ENCODE measurements at regions of chr5 and their contacts with region 1.

Region 1: DNA sequence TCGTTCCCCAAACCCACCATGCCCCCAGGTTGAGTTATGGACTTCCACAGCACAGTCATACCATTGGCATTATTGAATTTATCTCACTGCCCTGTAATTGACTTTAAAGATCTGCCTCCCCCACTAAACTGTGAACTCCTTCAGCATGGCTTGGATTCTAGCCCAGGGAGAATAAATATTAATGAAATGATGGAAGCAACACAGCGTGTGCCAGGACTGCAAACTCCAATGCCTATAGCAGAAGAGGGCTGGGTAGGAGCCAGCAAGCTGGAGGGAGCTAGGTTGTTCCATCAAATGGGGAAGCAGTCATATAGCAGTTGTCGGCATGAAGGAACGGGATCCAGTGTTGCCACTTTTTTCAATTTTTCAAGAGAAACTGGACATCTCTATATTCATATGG is 69.0 kb upstream of the MSX2 start:
- DNase-seq: no peak
- H3K4me3 ChIP-seq: no peak overlapping the region
- H3K27ac ChIP-seq: no peak overlapping the region
- H3K4me1 ChIP-seq: no peaks in the 10 kb centered on the region
- H3K27me3 ChIP-seq: no peaks in the 10 kb centered on the region
- CTCF ChIP-seq: no peak
- EP300 ChIP-seq: no peak
- POLR2A ChIP-seq: no peak

Region 2: DNA sequence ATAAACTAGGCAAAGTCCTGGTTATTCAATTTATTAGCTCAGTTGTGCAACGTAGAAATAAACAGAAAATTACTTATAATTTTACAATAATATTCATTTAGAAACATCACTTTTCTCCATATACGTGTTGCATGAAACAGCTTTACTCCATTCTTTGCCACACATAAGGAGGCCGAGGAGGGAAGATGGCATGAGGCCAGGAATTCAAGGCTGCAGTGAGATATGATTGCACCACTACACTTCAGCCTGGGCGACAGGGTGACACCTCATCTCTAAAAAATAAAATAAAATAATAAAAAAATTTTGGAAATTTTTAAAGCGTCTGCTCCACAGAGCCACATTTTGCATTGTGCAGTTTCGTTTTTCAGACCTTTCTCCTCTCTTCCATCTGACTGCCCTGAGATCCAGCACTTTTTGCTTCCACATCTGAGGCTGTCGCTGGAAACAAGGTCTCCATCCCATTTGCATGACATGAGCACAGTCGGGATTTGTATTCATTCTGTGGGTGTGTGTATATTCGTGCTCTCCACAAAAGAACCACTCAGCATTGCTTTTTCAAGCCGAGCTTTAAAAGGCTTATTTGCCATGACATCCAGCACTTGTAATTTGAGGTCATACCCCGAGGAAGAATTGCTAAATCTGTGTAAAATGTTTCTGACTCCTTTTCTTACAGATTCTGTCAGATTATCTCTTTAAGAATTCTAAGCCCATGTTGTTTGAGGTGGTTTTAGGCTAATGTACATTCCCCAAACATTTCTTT is 29.6 kb before region 1 on chr5:
- intact Hi-C with region 1: no loop called
- DNase-seq: no peak
- H3K4me3 ChIP-seq: no peak overlapping the region
- H3K27ac ChIP-seq: no peak overlapping the region
- H3K4me1 ChIP-seq: no peaks in the 10 kb centered on the region
- H3K27me3 ChIP-seq: no peaks in the 10 kb centered on the region
- CTCF ChIP-seq: no peak
- EP300 ChIP-seq: no peak
- POLR2A ChIP-seq: no peak

Region 3: GRCh38 chr5:174690271-174690670 is 34.9 kb after region 1 on chr5:
- intact Hi-C with region 1: loop called in 1 of 4 experiments (anchors 1 kb)
- DNase-seq: peak in 2 of 5 donors; percentile 16 to 42
- H3K4me3 ChIP-seq: no peak overlapping the region
- H3K27ac ChIP-seq: no peak overlapping the region
- H3K4me1 ChIP-seq: no peaks in the 10 kb centered on the region
- H3K27me3 ChIP-seq: no peaks in the 10 kb centered on the region
- CTCF ChIP-seq: no peak
- EP300 ChIP-seq: no peak
- POLR2A ChIP-seq: no peak

Region 4: GRCh38 chr5:175508896-175509295 is 853.5 kb after region 1 on chr5:
- intact Hi-C with region 1: no loop called
- DNase-seq: no peak
- H3K4me3 ChIP-seq: no peak overlapping the region
- H3K27ac ChIP-seq: no peak overlapping the region
- H3K4me1 ChIP-seq: no peaks in the 10 kb centered on the region
- H3K27me3 ChIP-seq: no peaks in the 10 kb centered on the region
- CTCF ChIP-seq: no peak
- EP300 ChIP-seq: no peak
- POLR2A ChIP-seq: no peak

Region 5: DNA sequence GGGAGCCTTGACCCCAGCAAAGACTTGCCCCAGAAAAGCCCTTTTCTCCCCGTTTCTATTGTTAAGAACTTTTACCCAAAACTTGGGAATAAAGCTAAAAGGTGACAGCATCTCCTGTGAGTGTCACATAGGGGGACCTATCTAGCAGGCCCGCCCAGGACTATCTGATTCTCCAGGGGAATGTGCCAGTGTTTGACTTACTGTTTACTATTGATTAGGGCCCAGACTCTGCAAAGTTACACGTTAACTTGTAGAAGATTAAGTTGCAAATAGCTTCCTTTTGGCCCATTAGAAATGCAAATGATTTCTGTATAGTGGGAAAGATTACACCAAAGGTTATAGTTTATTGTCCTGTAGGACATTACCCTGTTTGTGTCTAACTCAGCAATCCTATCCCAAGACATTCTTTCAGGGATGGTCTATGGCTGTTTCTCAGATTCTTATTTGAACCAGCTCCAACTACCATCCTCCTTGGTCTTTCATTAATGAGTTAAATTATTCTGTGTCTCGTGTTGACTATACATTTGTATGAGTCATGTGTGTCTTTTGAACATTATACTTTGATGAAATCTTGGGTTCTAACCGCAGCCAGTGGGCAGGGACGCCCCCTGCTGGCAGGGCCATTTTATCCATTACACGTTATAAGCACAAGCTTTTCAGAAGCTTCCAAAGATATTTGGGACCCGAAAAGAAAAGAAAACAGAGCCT is 1063.2 kb after region 1 on chr5:
- intact Hi-C with region 1: no loop called
- DNase-seq: no peak
- H3K4me3 ChIP-seq: no peak overlapping the region
- H3K27ac ChIP-seq: no peak overlapping the region
- H3K4me1 ChIP-seq: no peaks in the 10 kb centered on the region
- H3K27me3 ChIP-seq: no peaks in the 10 kb centered on the region
- CTCF ChIP-seq: no peak
- EP300 ChIP-seq: no peak
- POLR2A ChIP-seq: no peak